K562 (cell line): ENCODE measurements at regions of chr2 and their contacts with region 1.

Region 1: GRCh38 chr2:201231781-201232466 is 28.4 kb upstream of the CASP8 start:
- DNase-seq: peak; percentile 72 to 95 (median 78)
- ATAC-seq: peak; percentile 67
- H3K4me3 ChIP-seq: no peak overlapping the region
- H3K27ac ChIP-seq: peak overlapping the region; percentile 71
- H3K4me1 ChIP-seq: peaks cover 4 to 10% of the 10 kb centered on the region in 2 experiments; a peak in 3 of 5 replicates
- H3K27me3 ChIP-seq: no peaks in the 10 kb centered on the region
- CTCF ChIP-seq: peak; percentile 85 to 91 (median 90)
- EP300 ChIP-seq: no peak
- POLR2A ChIP-seq: no peak; the same call in 1 of the 2 replicates
- RAD21 ChIP-seq: peak; percentile 72 to 87

Region 2: DNA sequence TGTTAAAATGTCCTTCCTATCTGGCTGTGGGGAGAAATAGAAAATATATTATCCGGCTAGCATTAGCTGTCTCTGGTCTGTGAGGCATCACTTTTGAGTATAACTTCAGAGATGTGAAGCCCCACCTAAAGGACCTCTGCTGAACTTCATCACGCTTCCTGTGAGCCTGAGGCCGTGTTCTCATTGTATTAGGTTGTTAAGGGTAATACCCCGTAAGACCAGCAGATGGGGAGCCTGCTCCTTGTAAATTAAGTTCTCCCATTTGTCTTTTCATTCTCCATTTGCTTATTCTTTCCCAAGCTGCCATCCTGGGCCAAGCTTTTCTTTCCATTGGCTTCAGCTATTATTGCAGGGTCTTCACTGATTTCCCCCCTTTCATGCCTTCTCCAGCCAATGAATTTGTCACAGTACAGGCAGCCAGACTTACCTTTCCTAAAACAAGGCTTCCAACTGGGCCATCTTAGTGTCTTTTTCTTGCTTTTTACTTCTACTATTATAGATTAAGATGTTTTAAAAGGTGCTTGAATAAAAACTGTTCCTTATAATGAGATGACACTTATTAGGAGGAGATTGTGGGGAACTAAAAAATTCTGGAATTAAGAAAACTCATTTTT is 330.4 kb before region 1 on chr2:
- CTCF ChIA-PET with region 1: interaction called, 13 read pairs
- POLR2A ChIA-PET with region 1: interaction called, 3 read pairs
- in situ Hi-C with region 1: no loop called
- intact Hi-C with region 1: loop called (anchors 1 kb)
- DNase-seq: peak; percentile 67 to 84 (median 73)
- ATAC-seq: peak; percentile 98
- H3K4me3 ChIP-seq: no peak overlapping the region
- H3K27ac ChIP-seq: no peak overlapping the region
- H3K4me1 ChIP-seq: no peaks in the 10 kb centered on the region
- H3K27me3 ChIP-seq: no peaks in the 10 kb centered on the region
- CTCF ChIP-seq: peak; percentile 78 to 92 (median 89)
- EP300 ChIP-seq: no peak
- POLR2A ChIP-seq: no peak
- RAD21 ChIP-seq: peak; percentile 71 to 76

Region 3: GRCh38 chr2:201084863-201085262 is 147.1 kb before region 1 on chr2:
- CTCF ChIA-PET with region 1: no interaction called
- POLR2A ChIA-PET with region 1: no interaction called
- in situ Hi-C with region 1: no loop called
- intact Hi-C with region 1: no loop called
- DNase-seq: no peak
- ATAC-seq: no peak
- H3K4me3 ChIP-seq: no peak overlapping the region
- H3K27ac ChIP-seq: no peak overlapping the region
- H3K4me1 ChIP-seq: peaks cover 0 to 4% of the 10 kb centered on the region in 2 experiments; a peak in 2 of 5 replicates
- H3K27me3 ChIP-seq: no peaks in the 10 kb centered on the region
- CTCF ChIP-seq: no peak
- EP300 ChIP-seq: no peak
- POLR2A ChIP-seq: no peak
- RAD21 ChIP-seq: no peak

Region 4: GRCh38 chr2:201118121-201118960 is 113.6 kb before region 1 on chr2:
- CTCF ChIA-PET with region 1: interaction called, 3 read pairs
- POLR2A ChIA-PET with region 1: no interaction called
- in situ Hi-C with region 1: no loop called
- intact Hi-C with region 1: loop called (anchors 1 kb)
- DNase-seq: peak; percentile 52 to 92 (median 58)
- ATAC-seq: peak; percentile 60
- H3K4me3 ChIP-seq: peak overlapping the region; percentile 93
- H3K27ac ChIP-seq: peak overlapping the region; percentile 98
- H3K4me1 ChIP-seq: peaks cover 17 to 27% of the 10 kb centered on the region in 2 experiments; a peak in 4 of 5 replicates
- H3K27me3 ChIP-seq: no peaks in the 10 kb centered on the region
- CTCF ChIP-seq: peak; percentile 67 to 89 (median 83)
- EP300 ChIP-seq: no peak; the same call in 1 of the 2 replicates
- POLR2A ChIP-seq: peak; percentile 69
- RAD21 ChIP-seq: peak; percentile 19 to 65; a peak in 3 of 4 replicates

Region 5: DNA sequence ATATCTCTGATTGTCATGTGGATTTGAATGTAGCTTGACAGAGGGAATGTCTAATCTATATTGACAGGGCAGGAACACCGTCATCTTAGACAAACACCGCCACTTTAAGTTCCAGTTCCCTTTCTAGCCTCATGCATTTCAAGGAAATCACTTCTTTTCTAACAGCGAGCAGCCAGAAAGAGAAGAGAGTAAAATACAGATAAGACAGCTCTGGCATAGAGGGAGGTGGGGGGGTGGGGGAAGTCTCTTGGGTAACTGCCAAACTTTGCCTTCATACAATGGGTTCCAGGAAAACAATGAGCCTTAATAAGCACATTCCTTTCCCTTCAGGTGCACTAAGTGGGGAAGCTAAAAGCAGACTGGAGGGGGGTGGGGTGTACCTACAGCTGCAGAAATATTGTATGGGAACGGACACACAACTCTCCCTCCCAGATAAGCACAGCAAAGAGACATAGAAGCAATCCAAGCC is 11.8 kb before region 1 on chr2:
- CTCF ChIA-PET with region 1: no interaction called
- POLR2A ChIA-PET with region 1: interaction called, 24 read pairs
- in situ Hi-C with region 1: no loop called
- intact Hi-C with region 1: no loop called
- DNase-seq: peak; percentile 27 to 87 (median 48)
- ATAC-seq: peak; percentile 76
- H3K4me3 ChIP-seq: no peak overlapping the region
- H3K27ac ChIP-seq: peak overlapping the region; percentile 29; the same call in 1 of the 3 replicates
- H3K4me1 ChIP-seq: peaks cover 17 to 23% of the 10 kb centered on the region in 2 experiments; a peak in 4 of 5 replicates
- H3K27me3 ChIP-seq: no peaks in the 10 kb centered on the region
- CTCF ChIP-seq: no peak
- EP300 ChIP-seq: peak; percentile 74
- POLR2A ChIP-seq: no peak
- RAD21 ChIP-seq: 0 out of 4 replicates have a peak, but pooled peaks of 1 of the 2 experiments have one; percentile 11

Region 6: GRCh38 chr2:201344663-201345366 is 112.9 kb after region 1 on chr2:
- CTCF ChIA-PET with region 1: no interaction called
- POLR2A ChIA-PET with region 1: no interaction called
- in situ Hi-C with region 1: no loop called
- intact Hi-C with region 1: loop called (anchors 5 kb)
- DNase-seq: peak; percentile 17 to 58 (median 35)
- ATAC-seq: peak; percentile 96
- H3K4me3 ChIP-seq: no peak overlapping the region
- H3K27ac ChIP-seq: no peak overlapping the region
- H3K4me1 ChIP-seq: no peaks in the 10 kb centered on the region; a peak in 1 of 5 replicates
- H3K27me3 ChIP-seq: no peaks in the 10 kb centered on the region
- CTCF ChIP-seq: peak; percentile 59 to 98 (median 83)
- EP300 ChIP-seq: no peak
- POLR2A ChIP-seq: no peak
- RAD21 ChIP-seq: peak in 1 of 2 experiments; percentile 72; a peak in 2 of 4 replicates

Region 7: GRCh38 chr2:201517094-201517493 is 285.2 kb after region 1 on chr2:
- CTCF ChIA-PET with region 1: no interaction called
- POLR2A ChIA-PET with region 1: no interaction called
- in situ Hi-C with region 1: no loop called
- intact Hi-C with region 1: no loop called
- DNase-seq: no peak
- ATAC-seq: no peak
- H3K4me3 ChIP-seq: no peak overlapping the region
- H3K27ac ChIP-seq: no peak overlapping the region
- H3K4me1 ChIP-seq: no peaks in the 10 kb centered on the region
- H3K27me3 ChIP-seq: no peaks in the 10 kb centered on the region
- CTCF ChIP-seq: no peak
- EP300 ChIP-seq: no peak
- POLR2A ChIP-seq: no peak
- RAD21 ChIP-seq: no peak

Region 8: DNA sequence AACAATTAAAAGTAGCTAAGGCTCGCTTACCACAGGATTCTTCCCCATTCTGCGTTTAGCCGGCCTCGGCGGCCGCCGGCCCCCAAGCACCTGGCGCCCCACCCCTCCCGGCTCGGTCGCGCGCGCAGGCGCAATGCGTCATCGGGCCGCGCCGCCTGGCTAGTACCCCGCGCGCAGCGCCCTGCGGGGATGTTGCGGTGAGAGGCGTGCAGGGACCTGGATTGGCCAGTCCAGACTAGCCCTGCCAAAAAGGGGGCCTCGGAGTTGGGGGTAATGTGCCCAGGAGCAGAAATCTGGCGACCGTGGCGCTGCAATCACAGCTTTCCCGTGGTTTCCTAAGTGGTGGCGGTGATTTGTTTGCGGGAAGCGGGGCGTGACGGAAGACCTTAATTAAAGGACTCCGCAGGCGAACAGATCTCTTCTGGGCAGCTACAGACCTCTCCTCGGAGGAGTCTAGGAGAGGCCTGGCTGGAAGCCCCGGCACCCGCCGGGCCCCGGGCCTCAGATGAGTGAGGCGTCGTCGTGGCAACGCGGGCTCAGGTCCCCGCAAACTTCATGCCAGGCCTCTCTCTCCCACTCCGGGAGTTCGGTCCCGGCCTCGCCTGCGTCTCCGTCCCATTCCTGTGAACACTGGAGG is 410.8 kb after region 1 on chr2:
- CTCF ChIA-PET with region 1: no interaction called
- POLR2A ChIA-PET with region 1: no interaction called
- in situ Hi-C with region 1: no loop called
- intact Hi-C with region 1: loop called (anchors 2 kb)
- DNase-seq: peak; percentile 83 to 86 (median 86)
- ATAC-seq: peak; percentile 95
- H3K4me3 ChIP-seq: peak overlapping the region; percentile 67
- H3K27ac ChIP-seq: peak overlapping the region; percentile 63
- H3K4me1 ChIP-seq: peaks cover 0 to 10% of the 10 kb centered on the region in 2 experiments; a peak in 1 of 5 replicates
- H3K27me3 ChIP-seq: no peaks in the 10 kb centered on the region
- CTCF ChIP-seq: no peak
- EP300 ChIP-seq: no peak
- POLR2A ChIP-seq: peak; percentile 77
- RAD21 ChIP-seq: no peak